HEK293 (cell line): ENCODE measurements at regions of chr10 and their contacts with region 1.

Region 1: GRCh38 chr10:110260746-110261477 is 43.8 kb downstream of the SMNDC1 start:
- H3K4me3 ChIP-seq: no peak overlapping the region
- H3K27ac ChIP-seq: no peak overlapping the region
- H3K4me1 ChIP-seq: peaks cover 15% of the 10 kb centered on the region; the same call in 1 of the 2 replicates
- CTCF ChIP-seq: no peak

Region 2: GRCh38 chr10:110081911-110082310 is 179.0 kb before region 1 on chr10:
- CTCF ChIA-PET with region 1: no interaction called
- POLR2A ChIA-PET with region 1: no interaction called
- H3K4me3 ChIP-seq: no peak overlapping the region
- H3K27ac ChIP-seq: no peak overlapping the region; the same call in 1 of the 2 replicates
- H3K4me1 ChIP-seq: peaks cover 56% of the 10 kb centered on the region
- CTCF ChIP-seq: no peak

Region 3: DNA sequence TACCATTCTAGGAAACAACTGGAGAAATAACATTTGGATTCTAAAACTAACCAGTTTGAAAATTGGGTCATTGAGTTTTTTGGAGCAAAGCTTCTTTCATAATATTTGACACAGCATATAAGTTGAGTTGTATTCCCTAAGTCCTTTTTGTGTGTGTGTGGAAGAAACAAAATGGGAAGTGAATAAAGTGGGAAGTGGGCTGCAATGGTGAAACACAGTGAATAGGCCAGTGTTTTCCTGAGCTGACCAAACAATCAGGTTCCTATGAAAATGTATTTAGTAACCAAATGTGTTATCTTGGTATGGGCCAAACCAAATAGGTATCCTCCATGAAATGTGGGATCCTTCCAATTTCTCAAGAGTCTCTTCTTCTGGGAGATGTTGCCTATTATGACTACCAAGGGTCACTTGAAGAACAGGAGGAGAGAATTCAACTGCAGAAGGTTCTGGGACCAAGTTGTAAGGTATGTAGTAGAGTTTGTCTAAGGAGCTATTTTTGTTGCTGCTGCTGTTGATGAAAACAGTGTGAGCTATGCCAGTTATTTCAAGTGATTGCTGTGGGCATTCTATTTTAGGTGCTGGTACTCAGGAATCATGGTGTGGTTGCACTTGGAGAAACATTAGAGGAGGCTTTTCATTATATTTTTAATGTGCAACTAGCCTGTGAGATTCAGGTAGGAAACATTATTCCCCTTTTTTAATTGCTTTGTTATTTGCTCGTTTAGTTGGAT is 141.9 kb before region 1 on chr10:
- CTCF ChIA-PET with region 1: no interaction called
- POLR2A ChIA-PET with region 1: no interaction called
- H3K4me3 ChIP-seq: no peak overlapping the region
- H3K27ac ChIP-seq: no peak overlapping the region
- H3K4me1 ChIP-seq: no peaks in the 10 kb centered on the region
- CTCF ChIP-seq: no peak

Region 4: DNA sequence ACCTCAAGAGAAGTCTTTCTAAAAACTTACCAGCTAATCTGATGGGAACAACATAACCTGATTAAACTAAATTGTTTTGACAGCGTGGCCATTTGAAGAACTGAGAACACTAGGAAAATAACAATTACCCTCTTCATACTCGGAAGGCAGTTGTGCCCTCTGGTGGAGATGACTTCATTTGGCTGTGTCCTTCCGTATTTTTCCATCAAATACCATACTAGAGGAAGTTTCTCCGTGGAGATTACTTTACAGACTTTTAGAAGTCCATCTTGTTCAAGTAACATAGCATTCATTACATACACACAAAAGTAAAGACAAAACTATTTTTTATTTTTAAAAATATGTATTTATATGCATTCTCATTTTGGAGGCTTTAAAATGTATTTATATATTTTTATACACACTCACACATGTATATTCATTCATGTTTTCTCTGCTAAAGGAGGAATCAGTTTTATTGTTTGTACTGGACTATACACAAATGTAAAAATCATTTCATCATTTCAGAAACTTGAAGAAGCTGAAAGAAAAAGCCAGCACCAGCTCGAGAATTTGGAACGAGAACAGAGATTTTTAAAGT is 18.6 kb after region 1 on chr10:
- CTCF ChIA-PET with region 1: interaction called, 11 read pairs
- POLR2A ChIA-PET with region 1: no interaction called
- H3K4me3 ChIP-seq: no peak overlapping the region
- H3K27ac ChIP-seq: no peak overlapping the region
- H3K4me1 ChIP-seq: peaks cover 11% of the 10 kb centered on the region
- CTCF ChIP-seq: peak; percentile 65; the same call in 1 of the 2 replicates

Region 5: DNA sequence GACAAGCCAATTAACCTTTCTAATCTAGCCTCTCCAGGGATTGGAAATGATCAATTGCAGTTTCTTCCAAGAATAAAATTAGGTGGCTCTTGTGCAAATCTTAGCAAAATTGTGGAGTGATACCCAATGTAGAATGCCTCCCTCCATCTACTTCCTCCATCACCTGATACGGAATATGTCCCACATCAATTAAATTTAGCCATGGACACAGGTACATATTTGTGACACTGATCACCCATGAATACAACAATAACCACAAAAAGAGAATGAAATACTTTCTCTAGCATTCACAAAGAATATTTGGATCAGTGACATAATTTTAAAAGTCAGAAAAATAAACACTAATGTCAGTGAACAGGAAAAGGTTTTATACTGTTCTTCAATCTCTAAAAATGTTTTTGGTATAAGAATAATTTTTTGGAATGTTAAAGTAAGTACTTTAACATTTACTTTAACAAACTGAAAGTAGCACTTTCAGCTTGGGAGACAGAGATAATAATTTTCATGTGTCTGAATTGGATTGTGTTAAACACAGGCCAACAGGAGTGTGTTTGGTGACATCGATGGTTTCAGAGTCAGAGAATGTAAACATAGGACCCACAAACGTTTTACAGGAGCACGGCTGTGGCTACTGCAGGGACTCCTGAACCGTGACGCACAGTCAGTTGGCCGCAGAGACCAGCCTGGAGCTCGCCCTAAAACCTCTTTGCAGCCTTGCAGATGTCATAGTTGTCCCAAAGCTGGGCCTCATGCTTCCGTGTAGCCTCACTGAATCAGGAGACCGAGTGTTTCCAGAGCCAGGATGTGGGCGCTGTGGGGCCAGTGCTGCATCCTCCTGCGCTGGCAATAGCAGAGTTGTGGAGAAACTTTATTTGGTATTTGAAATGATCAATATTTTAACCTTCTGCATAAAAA is 390.4 kb after region 1 on chr10:
- CTCF ChIA-PET with region 1: no interaction called
- POLR2A ChIA-PET with region 1: no interaction called
- H3K4me3 ChIP-seq: no peak overlapping the region; the same call in 1 of the 2 replicates
- H3K27ac ChIP-seq: peak overlapping the region; percentile 45
- H3K4me1 ChIP-seq: peaks cover 53% of the 10 kb centered on the region
- CTCF ChIP-seq: no peak